AG04449 (cell line): ENCODE measurements at regions of chr12 and their contacts with region 1.

Region 1: GRCh38 chr12:72282721-72283120 is 10.6 kb downstream of the TRHDE start:
- DNase-seq: no peak
- H3K4me3 ChIP-seq: no peak overlapping the region
- CTCF ChIP-seq: peak; percentile 59

Region 2: DNA sequence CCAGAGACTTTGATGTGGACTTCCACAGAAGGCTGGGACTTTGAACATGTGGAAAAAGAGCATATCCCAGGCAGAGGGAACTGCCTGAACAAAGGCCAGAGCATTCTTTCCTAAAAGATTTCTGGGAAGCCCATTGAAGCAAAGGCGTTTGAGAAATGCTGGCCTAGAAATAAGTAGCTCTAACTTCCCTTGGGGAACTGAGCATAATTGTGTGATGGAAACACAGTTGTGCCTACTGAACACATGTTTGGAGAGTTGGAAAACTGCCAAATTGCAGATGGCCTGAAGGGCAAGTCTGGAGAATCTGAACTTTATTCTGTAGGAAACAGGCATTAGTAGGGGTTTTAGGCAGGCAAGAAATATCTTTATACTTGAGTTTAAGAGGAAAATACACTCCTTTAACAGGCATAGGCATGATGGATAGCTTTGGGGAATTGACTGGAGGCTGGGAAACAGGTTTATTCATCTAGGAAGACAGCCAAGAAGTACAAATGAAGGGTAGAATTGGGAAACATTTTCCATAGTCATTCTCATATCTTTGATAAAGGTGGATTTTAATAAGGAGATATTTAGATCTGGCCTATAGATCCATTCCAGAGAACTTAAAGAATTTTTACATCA is 210.0 kb before region 1 on chr12:
- CTCF ChIA-PET with region 1: no interaction called
- POLR2A ChIA-PET with region 1: no interaction called
- DNase-seq: no peak
- H3K4me3 ChIP-seq: no peak overlapping the region
- CTCF ChIP-seq: no peak

Region 3: GRCh38 chr12:72191761-72192160 is 91.0 kb before region 1 on chr12:
- CTCF ChIA-PET with region 1: no interaction called
- POLR2A ChIA-PET with region 1: no interaction called
- DNase-seq: no peak
- H3K4me3 ChIP-seq: no peak overlapping the region
- CTCF ChIP-seq: no peak

Region 4: DNA sequence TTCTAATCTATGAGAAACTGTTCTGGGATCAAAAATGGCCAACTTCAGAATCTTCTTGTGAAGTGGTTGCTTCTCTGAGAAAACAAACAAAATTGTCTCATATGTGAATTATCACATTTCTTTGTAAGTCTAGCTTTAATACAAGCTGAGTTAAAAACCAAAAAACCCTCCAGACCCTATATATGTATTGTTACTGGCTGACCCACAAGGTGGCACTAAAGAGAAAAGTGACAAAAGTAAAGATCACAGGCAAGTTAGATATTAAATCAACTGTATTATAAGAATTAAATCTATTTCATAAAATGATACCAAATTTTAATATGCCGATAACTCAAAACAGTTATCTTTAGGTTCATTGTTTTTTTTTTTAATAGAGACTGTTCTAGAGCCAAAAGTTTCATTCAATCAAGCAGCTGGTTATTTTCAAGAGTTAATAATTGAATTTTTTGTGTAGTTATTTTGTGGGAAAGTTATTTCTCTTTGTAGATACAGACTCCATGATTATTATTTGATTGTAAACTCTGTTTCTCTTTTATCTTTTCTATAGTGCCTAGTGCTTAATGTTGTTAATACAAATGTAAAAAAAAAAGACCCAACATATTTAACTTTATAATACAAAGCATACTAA is 18.1 kb before region 1 on chr12:
- CTCF ChIA-PET with region 1: interaction called, 50 read pairs
- POLR2A ChIA-PET with region 1: no interaction called
- DNase-seq: no peak
- H3K4me3 ChIP-seq: no peak overlapping the region
- CTCF ChIP-seq: peak; percentile 21

Region 5: DNA sequence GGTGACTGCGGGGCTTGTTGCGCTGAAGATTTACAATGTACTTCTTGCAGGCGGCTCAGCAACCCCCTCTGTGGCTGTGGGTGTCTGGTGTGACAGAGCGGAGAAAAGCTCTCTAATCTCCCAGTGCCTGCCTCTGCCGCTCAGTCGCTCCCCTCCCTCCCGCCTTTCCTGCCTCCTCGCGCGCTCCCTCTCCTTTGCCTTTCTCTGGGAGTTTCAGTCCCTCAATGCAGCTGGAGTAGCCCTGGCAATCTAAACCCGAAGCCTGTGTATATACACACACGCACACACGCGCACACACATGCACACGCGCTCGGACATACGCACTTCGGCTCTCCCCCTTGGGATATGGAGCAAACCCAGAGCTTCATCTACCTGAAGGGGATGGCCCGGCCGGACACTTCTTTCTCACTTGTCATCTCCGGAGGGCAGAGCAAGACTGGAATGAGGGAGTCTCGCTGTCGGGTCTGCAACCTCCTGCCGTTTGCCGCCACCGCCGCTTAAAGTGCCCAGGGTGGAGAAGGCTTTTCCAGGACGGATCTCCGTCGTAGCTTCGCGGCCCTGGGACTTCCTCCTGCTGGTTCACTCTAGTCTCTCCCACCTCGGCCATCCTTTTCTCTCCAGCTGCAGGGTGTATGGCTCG is 11.2 kb before region 1 on chr12:
- CTCF ChIA-PET with region 1: interaction called, 62 read pairs
- POLR2A ChIA-PET with region 1: interaction called, 4 read pairs
- DNase-seq: no peak
- H3K4me3 ChIP-seq: peak overlapping the region; percentile 93
- CTCF ChIP-seq: no peak

Region 6: GRCh38 chr12:72296389-72296788 is 13.7 kb after region 1 on chr12:
- CTCF ChIA-PET with region 1: interaction called, 13 read pairs
- POLR2A ChIA-PET with region 1: no interaction called
- DNase-seq: no peak
- H3K4me3 ChIP-seq: no peak overlapping the region
- CTCF ChIP-seq: no peak